Activated CD4-positive, alpha-beta T cell treated with anti-CD3 and anti-CD28 coated beads, Interleukin-2, amount 10 ng/mL, durations not matched to agents 24 days and 14 days (primary cell): ENCODE measurements at regions of chr17 and their contacts with region 1.

Region 1: GRCh38 chr17:7478276-7479153 is 916 bp downstream of the ZBTB4 start:
- DNase-seq: peak; percentile 88
- H3K4me3 Mint-ChIP-seq: peak overlapping the region; percentile 90
- H3K27ac Mint-ChIP-seq: peak overlapping the region; percentile 78
- H3K4me1 Mint-ChIP-seq: peaks cover 51% of the 10 kb centered on the region
- H3K27me3 Mint-ChIP-seq: no peaks in the 10 kb centered on the region

Region 2: GRCh38 chr17:7460850-7461660 is 17.5 kb before region 1 on chr17:
- intact Hi-C with region 1: loop called (anchors 1 kb)
- DNase-seq: no peak
- H3K4me3 Mint-ChIP-seq: no peak overlapping the region
- H3K27ac Mint-ChIP-seq: no peak overlapping the region
- H3K4me1 Mint-ChIP-seq: peaks cover 10% of the 10 kb centered on the region
- H3K27me3 Mint-ChIP-seq: no peaks in the 10 kb centered on the region